Activated T-helper 2 cell treated with anti-CD3 and anti-CD28 coated beads, Interferon-gamma antibody, Interleukin-2, Interleukin-4, amounts not matched to agents 10 μg/mL and 5 μg/mL and 100 μg/mL, durations not matched to agents 14 hours and 24 hours and 36 hours (primary cell): ENCODE measurements at regions of chr9 and their contacts with region 1.

Region 1: GRCh38 chr9:36382484-36382883 is 17.6 kb downstream of the RNF38 start:
- DNase-seq: no peak
- H3K4me3 Mint-ChIP-seq: no peak overlapping the region
- H3K27ac Mint-ChIP-seq: no peak overlapping the region
- H3K4me1 Mint-ChIP-seq: peaks cover 46% of the 10 kb centered on the region
- H3K27me3 Mint-ChIP-seq: no peaks in the 10 kb centered on the region

Region 2: DNA sequence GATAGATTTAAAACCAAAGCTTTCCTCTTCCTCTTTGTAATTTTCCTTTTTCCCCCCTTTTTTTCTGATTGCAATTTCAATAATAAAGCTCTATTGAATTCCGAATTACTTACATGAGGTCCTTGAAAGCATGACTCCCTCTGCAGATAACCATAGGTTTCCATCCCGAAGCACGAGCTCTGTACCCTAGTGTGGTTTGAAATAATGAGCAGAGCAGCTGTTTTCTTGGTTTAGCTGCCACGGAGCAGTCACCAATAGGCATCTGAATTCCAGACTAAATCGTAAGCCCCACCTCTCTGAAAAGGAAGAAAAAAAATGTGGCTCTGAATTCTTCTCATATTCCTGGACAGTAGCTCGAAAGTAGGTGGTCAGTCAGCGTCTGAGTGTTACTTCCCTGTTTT is 105.7 kb before region 1 on chr9:
- intact Hi-C with region 1: no loop called
- DNase-seq: no peak
- H3K4me3 Mint-ChIP-seq: no peak overlapping the region
- H3K27ac Mint-ChIP-seq: no peak overlapping the region
- H3K4me1 Mint-ChIP-seq: no peaks in the 10 kb centered on the region
- H3K27me3 Mint-ChIP-seq: no peaks in the 10 kb centered on the region

Region 3: DNA sequence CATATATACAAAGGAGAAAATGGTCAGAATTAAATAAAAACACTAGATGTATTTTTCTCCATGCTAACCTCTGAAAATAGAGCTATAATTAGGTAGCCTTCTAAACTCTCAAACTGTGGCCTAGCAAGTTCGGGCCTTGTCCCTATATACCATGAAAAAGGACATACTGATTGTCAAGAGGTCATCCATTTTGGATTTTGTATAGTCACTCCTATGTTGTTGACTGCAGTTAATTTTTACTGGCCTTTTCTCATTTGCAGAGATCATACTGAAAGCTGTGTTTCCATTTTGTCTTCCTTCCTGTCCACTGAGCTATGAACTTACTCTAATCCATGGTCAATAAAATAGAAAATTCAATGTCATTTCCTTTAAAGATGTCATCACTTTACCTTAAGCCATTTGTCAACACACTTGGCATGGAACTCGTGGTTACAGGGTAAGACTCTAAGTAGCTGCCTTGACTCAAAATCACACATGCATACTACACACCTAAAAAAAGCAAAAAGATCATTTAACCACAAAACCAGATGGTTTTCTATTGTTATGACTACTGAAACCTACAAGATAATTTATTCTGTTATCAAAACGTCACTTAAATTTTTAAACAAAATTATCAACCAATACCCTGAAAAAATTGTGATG is 40.4 kb before region 1 on chr9:
- intact Hi-C with region 1: loop called (anchors 5 kb)
- DNase-seq: no peak
- H3K4me3 Mint-ChIP-seq: no peak overlapping the region
- H3K27ac Mint-ChIP-seq: peak overlapping the region; percentile 90
- H3K4me1 Mint-ChIP-seq: peaks cover 11% of the 10 kb centered on the region
- H3K27me3 Mint-ChIP-seq: no peaks in the 10 kb centered on the region